Psoas muscle (tissue), 8 donors: ENCODE measurements at regions of chr22 and their contacts with region 1.

Region 1: DNA sequence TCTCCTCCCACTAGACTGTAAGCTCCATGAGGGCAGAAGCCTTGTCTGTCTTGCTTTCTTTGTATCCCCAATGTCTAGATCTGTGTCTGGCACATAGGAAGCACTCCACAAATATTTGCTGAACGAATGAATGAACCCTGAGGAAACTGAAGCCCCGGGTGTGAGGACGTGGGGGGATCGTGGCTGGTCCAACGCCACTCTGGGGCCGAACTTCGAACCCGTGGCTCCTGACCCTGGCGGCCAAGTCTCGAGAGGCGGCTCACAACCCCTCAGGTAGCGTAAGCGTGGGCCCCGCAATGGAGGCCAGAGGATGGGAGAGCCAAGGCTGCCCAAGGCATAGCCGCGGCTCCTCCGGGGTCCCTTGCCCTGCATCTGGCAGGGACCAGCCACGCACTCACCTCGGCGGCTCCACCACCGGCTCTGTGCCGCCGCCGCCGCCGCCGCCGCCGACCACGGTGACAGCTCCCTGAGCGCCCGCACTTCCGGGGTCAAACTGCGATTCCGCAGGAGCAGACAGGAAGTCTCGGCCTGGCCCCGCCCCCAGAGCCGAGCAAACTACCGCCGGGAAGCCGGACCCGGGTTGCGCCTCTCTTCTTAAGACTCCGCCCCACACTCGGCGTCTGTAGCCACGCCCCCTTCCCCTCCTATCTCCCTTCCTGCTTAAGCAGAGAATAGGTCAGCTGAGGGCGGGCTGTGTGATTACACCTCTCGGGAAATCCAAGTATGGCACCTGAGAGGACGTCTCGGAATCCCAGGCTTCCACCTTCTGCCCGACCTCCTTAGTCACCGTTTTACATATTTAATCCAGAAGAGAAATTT is at the start of gene ASCC2:
- DNase-seq: peak; percentile 99 to 100
- ATAC-seq: peak; percentile 97 to 100 (median 98)
- H3K4me3 ChIP-seq: peak within 1 kb of the TSS; percentile 97
- H3K27ac ChIP-seq: peak within 1 kb of the TSS; percentile 94
- H3K4me1 ChIP-seq: peaks cover 22% of the 10 kb centered on the region
- H3K27me3 ChIP-seq: no peaks in the 10 kb centered on the region
- CTCF ChIP-seq: no peak
- total RNA-seq, gene ASCC2: 47.1 to 58.6 (median 54.6) TPM

Region 2: DNA sequence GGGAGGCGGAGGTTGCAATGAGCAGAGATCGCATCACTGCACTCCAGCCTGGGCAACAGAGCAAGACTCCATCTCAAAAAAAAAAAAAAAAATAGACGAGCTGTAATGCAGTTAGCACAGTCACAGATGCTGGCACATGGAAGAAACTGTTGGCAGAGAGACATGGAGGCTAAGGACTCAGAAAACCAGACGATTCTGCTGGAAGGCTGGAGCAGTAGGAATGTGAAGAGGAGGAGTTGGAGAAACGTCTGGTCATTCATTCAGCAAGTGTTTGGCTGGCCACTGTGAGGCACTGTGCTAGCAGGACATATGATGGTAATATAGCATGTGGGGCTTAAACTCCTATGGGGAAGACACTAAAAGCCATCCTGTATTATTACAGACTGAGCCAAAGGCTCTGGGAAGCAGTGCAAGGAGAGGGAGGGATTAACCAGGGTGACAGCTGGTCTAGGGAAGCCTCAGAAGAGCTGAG is 65.8 kb before region 1 on chr22:
- intact Hi-C with region 1: loop called in 1 of 2 experiments (anchors 10 kb)
- DNase-seq: no peak
- ATAC-seq: peak; percentile 23 to 43 (median 42)
- H3K4me3 ChIP-seq: no peak overlapping the region
- H3K27ac ChIP-seq: peak overlapping the region; percentile 76
- H3K4me1 ChIP-seq: peaks cover 44% of the 10 kb centered on the region
- H3K27me3 ChIP-seq: no peaks in the 10 kb centered on the region
- CTCF ChIP-seq: no peak